Naive thymus-derived CD8-positive, alpha-beta T cell (primary cell): ENCODE measurements at regions of chr6 and their contacts with region 1.

Region 1: DNA sequence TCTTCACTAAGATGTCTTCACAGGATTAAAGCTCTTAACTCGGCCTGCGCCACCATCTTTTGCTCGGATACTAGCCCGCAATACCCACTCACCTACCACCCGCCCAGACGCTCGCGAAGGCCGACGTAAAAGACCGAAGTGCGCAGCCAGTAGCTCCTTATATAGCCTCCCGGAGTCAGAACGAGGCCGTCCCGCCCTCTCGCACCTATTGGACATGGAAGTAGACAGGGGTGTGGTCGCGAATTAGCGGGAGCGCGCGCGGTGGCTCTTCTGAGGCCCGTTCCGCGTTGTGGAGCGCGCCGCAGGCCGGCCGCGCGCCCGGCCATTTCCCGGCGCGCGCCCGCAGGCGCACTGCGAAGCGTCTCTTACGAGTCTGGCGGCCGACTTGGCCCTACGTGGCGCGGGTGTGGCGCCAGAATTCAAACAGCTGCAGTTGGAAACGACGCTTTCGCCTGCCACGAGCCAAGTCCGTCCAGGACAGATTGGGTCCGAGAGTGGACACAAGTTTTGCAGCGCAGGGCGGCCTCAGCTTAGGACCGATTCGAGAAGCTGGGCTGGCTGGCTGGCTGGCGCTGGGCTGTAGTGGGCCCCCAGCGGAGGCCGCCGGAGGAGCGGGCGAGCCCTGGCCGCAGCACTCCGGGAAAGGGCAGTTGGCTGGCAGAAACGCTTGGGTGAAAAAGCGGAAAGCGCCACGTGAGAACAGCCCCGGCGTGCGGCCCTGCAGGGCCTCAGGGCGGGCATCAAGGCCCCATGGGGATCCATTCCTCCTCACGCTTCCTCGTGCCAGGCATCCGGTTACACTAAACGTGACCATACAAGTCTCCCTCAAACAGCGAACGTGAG is 36.1 kb upstream of the SYNCRIP start:
- DNase-seq: peak; percentile 95 to 99 (median 98)
- ATAC-seq: peak; percentile 81 to 88
- H3K4me3 Mint-ChIP-seq: peak overlapping the region; percentile 94 to 99 (median 98)
- H3K27ac Mint-ChIP-seq: peak overlapping the region; percentile 97 to 100 (median 99)
- H3K4me1 Mint-ChIP-seq: peaks cover 26 to 48% (median 42%) of the 10 kb centered on the region in 4 donors
- H3K27me3 Mint-ChIP-seq: peaks cover 0 to 2% (median 0%) of the 10 kb centered on the region in 5 donors

Region 2: GRCh38 chr6:84921891-84922290 is 756.9 kb before region 1 on chr6:
- POLR2A ChIA-PET with region 1: no interaction called
- DNase-seq: no peak
- ATAC-seq: no peak
- H3K4me3 Mint-ChIP-seq: no peak overlapping the region
- H3K27ac Mint-ChIP-seq: no peak overlapping the region
- H3K4me1 Mint-ChIP-seq: no peaks in the 10 kb centered on the region
- H3K27me3 Mint-ChIP-seq: peaks cover 0 to 3% (median 0%) of the 10 kb centered on the region in 5 donors

Region 3: GRCh38 chr6:85449818-85450759 is 228.7 kb before region 1 on chr6 and contains the start of gene NT5E:
- POLR2A ChIA-PET with region 1: interaction called, 11 read pairs
- DNase-seq: peak; percentile 23 to 81 (median 58)
- ATAC-seq: peak; percentile 62 to 64
- H3K4me3 Mint-ChIP-seq: peak within 1 kb of the TSS; percentile 97 to 100 (median 99)
- H3K27ac Mint-ChIP-seq: peak within 1 kb of the TSS; percentile 91 to 99 (median 98)
- H3K4me1 Mint-ChIP-seq: peaks cover 36 to 71% (median 63%) of the 10 kb centered on the region in 4 donors
- H3K27me3 Mint-ChIP-seq: peaks cover 0 to 18% (median 0%) of the 10 kb centered on the region in 5 donors
- polyA plus RNA-seq, gene NT5E: 77.7 to 128 (median 103) TPM

Region 4: DNA sequence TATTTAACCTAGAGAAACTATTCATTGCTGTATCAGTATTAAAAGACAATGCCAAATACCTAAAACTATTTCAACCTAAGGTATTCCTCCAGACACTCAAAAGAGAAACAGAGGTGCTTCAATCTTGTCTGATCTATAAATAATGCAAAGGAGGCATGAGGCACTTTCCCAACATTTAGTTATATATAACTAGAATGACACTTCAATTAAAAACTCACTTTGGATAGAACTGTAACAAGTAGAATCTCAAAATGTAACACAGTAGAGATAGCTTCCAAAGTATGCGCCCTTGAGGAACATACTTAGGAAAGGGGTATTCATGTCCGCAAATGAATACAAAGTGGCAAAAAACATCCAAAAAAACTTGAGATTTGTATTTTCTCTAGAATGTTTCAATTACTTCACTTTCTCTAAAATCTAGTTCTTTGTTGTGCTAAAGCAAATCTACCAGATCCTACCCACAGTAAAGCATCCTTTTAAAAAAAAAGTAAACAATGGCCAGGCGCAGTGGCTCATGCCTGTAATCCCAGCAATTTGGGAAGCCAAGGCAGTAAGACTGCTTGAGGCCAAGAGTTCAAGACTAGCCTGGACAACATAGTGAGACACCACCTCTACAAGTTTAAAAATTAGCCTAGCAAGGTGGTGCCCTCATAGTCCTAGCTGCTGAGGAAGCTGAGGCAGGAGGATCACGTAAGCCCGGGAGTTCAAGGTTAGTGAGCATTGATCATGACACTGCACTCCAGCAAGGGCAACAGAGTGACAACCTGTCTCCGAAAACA is 46.5 kb before region 1 on chr6:
- POLR2A ChIA-PET with region 1: interaction called, 10 read pairs
- DNase-seq: no peak
- ATAC-seq: no peak
- H3K4me3 Mint-ChIP-seq: no peak overlapping the region
- H3K27ac Mint-ChIP-seq: peak overlapping the region in 1 of 10 donors; percentile 65
- H3K4me1 Mint-ChIP-seq: peaks cover 16 to 66% (median 38%) of the 10 kb centered on the region in 4 donors
- H3K27me3 Mint-ChIP-seq: no peaks in the 10 kb centered on the region

Region 5: GRCh38 chr6:85662251-85662650 is 16.6 kb before region 1 on chr6:
- POLR2A ChIA-PET with region 1: interaction called, 24 read pairs
- DNase-seq: no peak
- ATAC-seq: no peak
- H3K4me3 Mint-ChIP-seq: no peak overlapping the region
- H3K27ac Mint-ChIP-seq: no peak overlapping the region
- H3K4me1 Mint-ChIP-seq: peaks cover 0 to 2% (median 0%) of the 10 kb centered on the region in 4 donors
- H3K27me3 Mint-ChIP-seq: no peaks in the 10 kb centered on the region